Aorta (tissue), 5 donors: ENCODE measurements at regions of chr17 and their contacts with region 1.

Region 1: GRCh38 chr17:60036796-60037612 is 41.7 kb downstream of the HEATR6 start:
- DNase-seq: peak; percentile 66 to 88
- ATAC-seq: peak; percentile 88
- H3K4me3 ChIP-seq: no peak overlapping the region
- H3K27ac ChIP-seq: no peak overlapping the region
- H3K4me1 ChIP-seq: peaks cover 0 to 2% of the 10 kb centered on the region in 2 donors
- H3K27me3 ChIP-seq: peaks cover 0 to 3% of the 10 kb centered on the region in 2 donors

Region 2: DNA sequence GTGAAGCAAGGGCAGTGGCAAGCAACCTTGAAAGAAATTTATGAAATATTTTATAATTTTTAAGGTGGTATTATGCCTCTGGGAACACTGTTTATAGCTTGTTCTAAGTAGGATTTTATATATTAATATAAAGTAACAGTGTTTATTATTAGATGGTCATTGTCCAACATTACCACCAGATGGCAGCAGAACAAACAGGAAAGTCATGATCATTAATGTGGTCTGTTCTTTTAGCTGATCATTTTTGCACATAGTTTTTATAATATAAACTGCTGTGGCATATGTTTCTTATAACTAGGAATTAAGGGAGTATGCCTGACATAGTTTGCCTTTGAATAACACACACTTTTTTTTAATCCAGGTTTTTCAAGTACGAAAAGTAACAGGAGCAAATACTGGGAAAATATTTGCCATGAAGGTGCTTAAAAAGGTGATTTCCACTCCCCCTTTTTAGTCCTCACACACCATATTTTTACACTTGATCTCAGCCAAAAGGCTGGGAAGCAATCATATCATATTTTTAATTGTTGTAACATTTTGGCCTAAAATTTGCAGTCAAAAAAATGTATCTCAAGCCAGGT is 122.6 kb before region 1 on chr17:
- intact Hi-C with region 1: loop called (anchors 5 kb)
- DNase-seq: no peak
- ATAC-seq: no peak
- H3K4me3 ChIP-seq: no peak overlapping the region
- H3K27ac ChIP-seq: no peak overlapping the region
- H3K4me1 ChIP-seq: no peaks in the 10 kb centered on the region
- H3K27me3 ChIP-seq: no peaks in the 10 kb centered on the region